HepG2 (cell line): ENCODE measurements at regions of chr3 and their contacts with region 1.

Region 1: GRCh38 chr3:35946121-35946853 is 307.0 kb downstream of the ARPP21 start:
- DNase-seq: peak; percentile 18
- ATAC-seq: no peak
- H3K4me3 ChIP-seq: no peak overlapping the region
- H3K27ac ChIP-seq: no peak overlapping the region
- H3K4me1 ChIP-seq: no peaks in the 10 kb centered on the region
- H3K27me3 ChIP-seq: no peaks in the 10 kb centered on the region
- CTCF ChIP-seq: 0 out of 2 replicates have a peak, but pooled peaks have one; percentile 12
- EP300 ChIP-seq: no peak
- POLR2A ChIP-seq: no peak
- RAD21 ChIP-seq: no peak

Region 2: DNA sequence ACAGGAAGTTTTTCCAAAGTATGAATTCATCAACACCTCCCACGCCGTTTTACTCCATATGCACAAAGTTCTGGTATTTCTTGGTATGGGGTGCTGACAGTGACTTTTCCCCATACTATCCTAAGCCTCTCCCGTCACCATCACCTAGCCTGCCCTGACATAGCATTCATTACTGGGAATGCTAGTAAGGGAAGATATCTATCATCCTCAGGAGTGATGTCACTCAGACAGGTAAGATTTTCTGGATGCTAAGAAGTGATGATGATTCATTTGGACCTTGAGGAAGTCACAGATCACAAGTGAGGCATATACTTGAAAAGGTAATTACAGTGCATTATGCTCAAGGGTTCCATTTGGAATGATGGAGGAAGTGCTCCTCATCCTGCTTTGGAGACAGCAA is 78.9 kb after region 1 on chr3:
- CTCF ChIA-PET with region 1: no interaction called
- POLR2A ChIA-PET with region 1: no interaction called
- in situ Hi-C with region 1: no loop called
- intact Hi-C with region 1: loop called (anchors 2 kb)
- DNase-seq: no peak
- ATAC-seq: no peak
- H3K4me3 ChIP-seq: no peak overlapping the region
- H3K27ac ChIP-seq: no peak overlapping the region
- H3K4me1 ChIP-seq: no peaks in the 10 kb centered on the region
- H3K27me3 ChIP-seq: no peaks in the 10 kb centered on the region
- CTCF ChIP-seq: no peak
- EP300 ChIP-seq: no peak
- POLR2A ChIP-seq: no peak
- RAD21 ChIP-seq: no peak